ENCODE measurements at regions of chr1 and their contacts with region 1.

Region 1: DNA sequence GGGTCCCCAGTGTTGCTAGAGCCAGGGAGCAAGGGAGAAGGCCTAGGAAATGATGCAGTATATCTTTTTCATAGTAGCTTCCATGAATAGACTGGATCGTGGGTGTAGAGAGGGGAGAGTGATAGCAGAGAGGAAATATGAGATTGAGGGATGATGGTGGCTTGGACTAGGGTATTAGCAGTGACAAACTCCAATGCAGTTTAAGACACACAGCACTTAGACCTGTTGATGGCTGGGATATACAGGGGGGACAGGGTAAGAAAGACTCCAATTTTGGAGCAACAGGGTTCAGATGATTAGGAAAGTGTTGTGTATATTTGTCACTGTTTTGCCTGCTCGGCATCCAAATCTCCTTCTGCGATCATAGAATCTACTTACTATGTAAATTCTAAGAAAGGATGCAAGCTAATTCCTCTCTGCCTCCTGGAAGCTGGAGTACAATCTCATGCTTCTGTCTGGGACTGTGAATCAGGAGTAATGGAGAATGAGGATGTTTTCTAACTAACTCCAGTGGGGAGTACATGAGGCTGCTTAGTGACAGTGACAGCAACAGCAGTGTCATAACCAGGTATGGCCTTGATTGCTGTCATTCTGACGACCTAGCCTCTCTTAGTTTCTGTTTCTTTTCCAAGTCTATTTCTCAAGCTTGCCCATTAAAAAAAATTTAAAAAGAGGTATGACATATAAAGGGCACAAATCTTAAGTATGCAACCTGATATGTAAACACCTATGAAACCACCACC is 47.5 kb downstream of the SYDE2 start:
- DNase-seq: no peak
- ATAC-seq: peak in 1 of 4 experiments; percentile 29
- H3K4me3 ChIP-seq: no peak overlapping the region
- H3K4me3 Mint-ChIP-seq: no peak overlapping the region
- H3K27ac ChIP-seq: no peak overlapping the region
- H3K27ac Mint-ChIP-seq: no peak overlapping the region
- H3K4me1 ChIP-seq: no peaks in the 10 kb centered on the region
- H3K4me1 Mint-ChIP-seq: no peaks in the 10 kb centered on the region
- H3K27me3 ChIP-seq: no peaks in the 10 kb centered on the region
- H3K27me3 Mint-ChIP-seq: no peaks in the 10 kb centered on the region

Region 2: DNA sequence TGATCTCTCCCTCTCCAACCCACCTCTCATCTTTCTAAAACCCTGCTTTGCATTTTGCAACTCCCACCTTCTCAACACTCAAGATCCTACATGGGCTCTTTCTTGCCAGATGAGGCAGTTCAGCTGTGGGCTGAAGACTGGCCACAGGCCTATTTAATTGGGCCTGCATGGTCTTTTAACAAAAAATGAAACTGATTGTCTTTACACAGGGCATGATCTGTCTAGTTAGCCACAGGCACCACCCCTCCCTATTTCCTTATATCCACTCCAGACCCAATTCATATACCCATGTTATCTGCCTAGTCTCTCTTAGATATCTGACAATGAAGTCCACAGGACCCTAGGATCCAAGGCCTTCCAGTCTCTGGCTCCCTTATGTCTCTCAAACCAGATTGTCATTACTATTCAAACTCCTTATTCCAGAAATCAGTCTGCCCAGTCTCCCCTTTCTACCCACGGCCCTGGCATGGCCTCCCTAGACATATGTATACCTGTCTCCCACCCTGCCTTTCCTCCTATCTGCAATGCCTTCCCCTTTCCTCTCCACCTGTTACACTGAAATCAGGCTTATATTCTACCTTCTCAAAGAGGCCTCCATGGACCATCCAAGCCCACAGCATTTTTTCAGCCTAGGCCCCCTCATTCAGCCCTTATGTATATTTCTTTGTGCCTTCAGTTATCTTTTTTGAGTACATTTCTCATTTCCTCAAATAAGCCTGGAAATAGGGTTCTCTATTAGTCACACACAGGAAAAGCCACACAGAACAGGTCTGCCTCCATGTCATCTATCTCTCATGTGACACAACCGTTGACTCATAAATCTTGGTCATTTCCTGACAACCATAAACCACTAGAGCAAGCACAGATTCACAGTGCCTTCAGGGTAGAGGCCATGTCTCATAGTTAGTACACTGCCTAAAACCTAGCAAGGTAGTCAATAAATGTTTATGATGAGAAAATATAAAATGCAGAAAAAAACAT is 299.3 kb before region 1 on chr1:
- CTCF ChIA-PET with region 1: no interaction called
- POLR2A ChIA-PET with region 1: interaction called in 1 of 2 experiments, 13 read pairs
- DNase-seq: peak in 17 of 35 experiments; percentile 5 to 69 (median 16)
- ATAC-seq: peak; percentile 98 to 100 (median 100)
- H3K4me3 ChIP-seq: no peak overlapping the region
- H3K4me3 Mint-ChIP-seq: peak overlapping the region in 2 of 3 donors; percentile 1 to 5
- H3K27ac ChIP-seq: peak overlapping the region; percentile 51
- H3K27ac Mint-ChIP-seq: peak overlapping the region; percentile 91 to 94
- H3K4me1 ChIP-seq: peaks cover 17 to 19% of the 10 kb centered on the region in 2 experiments
- H3K4me1 Mint-ChIP-seq: peaks cover 39 to 49% (median 43%) of the 10 kb centered on the region in 3 donors
- H3K27me3 ChIP-seq: no peaks in the 10 kb centered on the region
- H3K27me3 Mint-ChIP-seq: no peaks in the 10 kb centered on the region

Measured in T-cell (primary cell).